B cell (primary cell): ENCODE measurements at regions of chr11 and their contacts with region 1.

Region 1: GRCh38 chr11:118198370-118198769 is 21.9 kb upstream of the SCN2B start:
- DNase-seq: peak; percentile 84
- ATAC-seq: peak; percentile 75
- H3K4me3 ChIP-seq: peak overlapping the region in 1 of 5 experiments; percentile 21
- H3K4me3 Mint-ChIP-seq: peak overlapping the region; percentile 44
- H3K27ac ChIP-seq: no peak overlapping the region
- H3K27ac Mint-ChIP-seq: no peak overlapping the region
- H3K4me1 ChIP-seq: peaks cover 0 to 3% of the 10 kb centered on the region in 2 donors
- H3K4me1 Mint-ChIP-seq: no peaks in the 10 kb centered on the region
- H3K27me3 ChIP-seq: peaks cover 0 to 15% (median 2%) of the 10 kb centered on the region in 4 experiments
- H3K27me3 Mint-ChIP-seq: peaks cover 3% of the 10 kb centered on the region
- CTCF ChIP-seq: peak; percentile 93

Region 2: GRCh38 chr11:118084247-118084646 is 114.1 kb before region 1 on chr11:
- CTCF ChIA-PET with region 1: no interaction called
- POLR2A ChIA-PET with region 1: no interaction called
- intact Hi-C with region 1: no loop called
- DNase-seq: no peak
- ATAC-seq: no peak
- H3K4me3 ChIP-seq: no peak overlapping the region
- H3K4me3 Mint-ChIP-seq: no peak overlapping the region
- H3K27ac ChIP-seq: no peak overlapping the region
- H3K27ac Mint-ChIP-seq: no peak overlapping the region
- H3K4me1 ChIP-seq: peaks cover 11 to 15% of the 10 kb centered on the region in 2 donors
- H3K4me1 Mint-ChIP-seq: peaks cover 14% of the 10 kb centered on the region
- H3K27me3 ChIP-seq: peaks cover 0 to 3% (median under 1%) of the 10 kb centered on the region in 4 experiments
- H3K27me3 Mint-ChIP-seq: peaks cover 22% of the 10 kb centered on the region
- CTCF ChIP-seq: no peak

Region 3: GRCh38 chr11:118128721-118129470 is 69.5 kb before region 1 on chr11:
- CTCF ChIA-PET with region 1: no interaction called
- POLR2A ChIA-PET with region 1: no interaction called
- intact Hi-C with region 1: no loop called
- DNase-seq: no peak
- ATAC-seq: no peak
- H3K4me3 ChIP-seq: no peak overlapping the region
- H3K4me3 Mint-ChIP-seq: no peak overlapping the region
- H3K27ac ChIP-seq: no peak overlapping the region
- H3K27ac Mint-ChIP-seq: no peak overlapping the region
- H3K4me1 ChIP-seq: no peaks in the 10 kb centered on the region
- H3K4me1 Mint-ChIP-seq: no peaks in the 10 kb centered on the region
- H3K27me3 ChIP-seq: peaks cover 0 to 12% (median 0%) of the 10 kb centered on the region in 4 experiments
- H3K27me3 Mint-ChIP-seq: peaks cover 18% of the 10 kb centered on the region
- CTCF ChIP-seq: no peak

Region 4: DNA sequence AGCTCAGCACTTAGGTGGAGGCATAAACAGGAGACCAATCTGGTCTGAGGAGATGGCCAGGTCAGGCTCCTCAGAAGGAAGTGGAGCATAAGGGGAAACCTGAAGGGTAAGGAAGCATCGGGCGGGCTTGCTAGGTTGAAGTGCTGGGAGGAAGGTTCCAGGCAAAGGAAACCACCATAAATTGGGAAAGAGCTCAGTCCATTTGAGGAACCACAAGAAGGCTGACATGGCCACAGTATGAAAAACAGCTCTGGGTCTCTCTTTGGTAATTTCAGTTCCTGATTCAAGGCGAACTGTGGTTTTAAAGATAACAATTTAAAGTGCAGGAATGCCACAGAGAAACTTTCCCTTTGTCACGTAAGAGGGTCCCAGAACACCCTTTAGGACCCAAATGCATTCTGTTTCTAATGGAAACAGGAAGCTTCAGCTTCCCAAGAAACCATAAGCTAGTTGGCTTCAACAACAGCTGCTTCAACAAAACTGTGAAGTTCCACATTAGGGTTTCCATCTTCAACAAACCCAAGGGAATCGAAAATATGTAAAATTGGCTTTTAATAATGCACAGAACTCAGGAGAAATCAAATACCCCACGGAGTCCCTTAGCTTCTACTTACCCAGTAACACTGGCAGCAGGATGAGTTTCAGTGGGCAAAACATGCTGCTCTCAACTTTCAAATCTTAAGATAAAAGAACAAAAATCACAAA is 16.0 kb after region 1 on chr11:
- CTCF ChIA-PET with region 1: interaction called, 59 read pairs
- POLR2A ChIA-PET with region 1: interaction called, 3 read pairs
- intact Hi-C with region 1: no loop called
- DNase-seq: peak; percentile 67
- ATAC-seq: peak; percentile 78
- H3K4me3 ChIP-seq: peak overlapping the region in 3 of 5 experiments; percentile 22 to 34 (median 28)
- H3K4me3 Mint-ChIP-seq: peak overlapping the region; percentile 84
- H3K27ac ChIP-seq: no peak overlapping the region
- H3K27ac Mint-ChIP-seq: peak overlapping the region; percentile 85
- H3K4me1 ChIP-seq: peaks cover 50 to 52% of the 10 kb centered on the region in 2 donors
- H3K4me1 Mint-ChIP-seq: peaks cover 53% of the 10 kb centered on the region
- H3K27me3 ChIP-seq: peaks cover 0 to 16% (median 8%) of the 10 kb centered on the region in 4 experiments
- H3K27me3 Mint-ChIP-seq: peaks cover 42% of the 10 kb centered on the region
- CTCF ChIP-seq: no peak

Region 5: DNA sequence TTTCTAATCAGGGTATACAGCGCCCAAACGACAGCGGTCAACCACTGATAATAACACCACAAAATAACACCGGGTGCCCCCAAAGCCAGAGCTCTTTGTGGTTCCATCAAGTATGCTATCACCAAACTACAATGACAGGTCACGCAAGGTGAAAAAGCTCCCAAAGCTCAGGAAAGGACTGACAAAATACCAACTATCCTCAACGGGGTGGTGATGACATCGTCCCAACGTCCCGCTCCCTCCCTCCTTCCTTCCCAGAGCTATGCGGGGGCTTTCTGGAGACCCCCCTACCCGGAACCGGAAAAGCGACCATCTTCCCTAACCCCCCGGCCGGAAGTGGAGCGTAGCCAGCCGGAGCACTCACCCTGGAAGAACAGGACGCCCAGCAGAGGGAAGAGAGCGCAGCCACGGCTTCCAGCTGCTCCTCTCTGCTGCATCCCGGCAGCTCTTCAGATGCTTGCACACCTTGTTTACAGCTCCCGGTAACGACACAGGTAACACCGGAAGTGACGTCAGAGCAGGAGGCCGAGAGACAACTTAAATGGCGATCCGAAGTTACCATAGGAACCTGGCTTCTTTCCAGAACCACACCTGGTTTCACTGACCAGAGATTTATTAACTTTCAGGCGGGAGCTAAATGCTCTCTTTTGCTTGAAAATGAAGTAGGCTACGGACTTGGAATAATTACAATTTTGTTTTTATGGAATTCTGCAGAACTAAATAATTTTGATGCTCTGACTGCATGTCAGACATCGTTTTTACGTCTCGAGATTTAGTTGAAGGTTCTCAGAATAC is 53.7 kb after region 1 on chr11 and contains the start of gene MPZL3:
- CTCF ChIA-PET with region 1: interaction called, 16 read pairs
- POLR2A ChIA-PET with region 1: no interaction called
- intact Hi-C with region 1: no loop called
- DNase-seq: peak; percentile 95
- ATAC-seq: peak; percentile 76
- H3K4me3 ChIP-seq: peak within 1 kb of the TSS; percentile 96 to 100 (median 97)
- H3K4me3 Mint-ChIP-seq: peak within 1 kb of the TSS; percentile 98
- H3K27ac ChIP-seq: peak within 1 kb of the TSS; percentile 91 to 97
- H3K27ac Mint-ChIP-seq: peak within 1 kb of the TSS; percentile 99
- H3K4me1 ChIP-seq: peaks cover 6 to 10% of the 10 kb centered on the region in 2 donors
- H3K4me1 Mint-ChIP-seq: peaks cover 13% of the 10 kb centered on the region
- H3K27me3 ChIP-seq: no peaks in the 10 kb centered on the region
- H3K27me3 Mint-ChIP-seq: peaks cover 20% of the 10 kb centered on the region
- CTCF ChIP-seq: no peak
- total RNA-seq, gene MPZL3: 4.2 and 4.9 TPM in 2 replicates

Region 6: DNA sequence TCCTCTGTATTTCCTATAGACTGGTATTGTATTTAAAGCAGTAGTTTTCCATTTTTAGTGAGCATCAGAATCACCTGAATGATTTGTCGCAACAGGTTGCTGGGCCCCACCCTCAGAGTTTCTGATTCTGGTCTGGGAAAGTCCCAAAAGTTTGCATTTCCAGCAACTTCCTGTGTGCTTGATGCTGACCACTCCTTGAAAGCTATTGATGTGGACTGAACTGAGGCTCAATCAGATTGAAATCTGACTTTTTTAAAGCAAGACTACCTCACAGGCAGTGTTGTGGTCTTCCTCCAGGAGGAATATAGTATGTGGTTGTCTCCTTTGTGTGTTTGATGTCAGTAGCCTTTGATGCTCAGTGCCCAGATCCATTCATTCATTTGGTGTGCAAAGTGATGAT is 82.9 kb after region 1 on chr11:
- CTCF ChIA-PET with region 1: interaction called, 10 read pairs
- POLR2A ChIA-PET with region 1: no interaction called
- intact Hi-C with region 1: no loop called
- DNase-seq: peak; percentile 54
- ATAC-seq: peak; percentile 31
- H3K4me3 ChIP-seq: no peak overlapping the region
- H3K4me3 Mint-ChIP-seq: peak overlapping the region; percentile 17
- H3K27ac ChIP-seq: peak overlapping the region in 1 of 2 donors; percentile 18
- H3K27ac Mint-ChIP-seq: no peak overlapping the region
- H3K4me1 ChIP-seq: peaks cover 7 to 15% of the 10 kb centered on the region in 2 donors
- H3K4me1 Mint-ChIP-seq: peaks cover 11% of the 10 kb centered on the region
- H3K27me3 ChIP-seq: peaks cover 0 to 7% (median 0%) of the 10 kb centered on the region in 4 experiments
- H3K27me3 Mint-ChIP-seq: peaks cover 8% of the 10 kb centered on the region
- CTCF ChIP-seq: no peak

Region 7: GRCh38 chr11:118301600-118302195 is 103.3 kb after region 1 on chr11:
- CTCF ChIA-PET with region 1: interaction called, 36 read pairs
- POLR2A ChIA-PET with region 1: no interaction called
- intact Hi-C with region 1: no loop called
- DNase-seq: no peak
- ATAC-seq: no peak
- H3K4me3 ChIP-seq: no peak overlapping the region
- H3K4me3 Mint-ChIP-seq: no peak overlapping the region
- H3K27ac ChIP-seq: no peak overlapping the region
- H3K27ac Mint-ChIP-seq: no peak overlapping the region
- H3K4me1 ChIP-seq: peaks cover 4 to 5% of the 10 kb centered on the region in 2 donors
- H3K4me1 Mint-ChIP-seq: peaks cover 11% of the 10 kb centered on the region
- H3K27me3 ChIP-seq: no peaks in the 10 kb centered on the region
- H3K27me3 Mint-ChIP-seq: peaks cover 5% of the 10 kb centered on the region
- CTCF ChIP-seq: no peak

Region 8: DNA sequence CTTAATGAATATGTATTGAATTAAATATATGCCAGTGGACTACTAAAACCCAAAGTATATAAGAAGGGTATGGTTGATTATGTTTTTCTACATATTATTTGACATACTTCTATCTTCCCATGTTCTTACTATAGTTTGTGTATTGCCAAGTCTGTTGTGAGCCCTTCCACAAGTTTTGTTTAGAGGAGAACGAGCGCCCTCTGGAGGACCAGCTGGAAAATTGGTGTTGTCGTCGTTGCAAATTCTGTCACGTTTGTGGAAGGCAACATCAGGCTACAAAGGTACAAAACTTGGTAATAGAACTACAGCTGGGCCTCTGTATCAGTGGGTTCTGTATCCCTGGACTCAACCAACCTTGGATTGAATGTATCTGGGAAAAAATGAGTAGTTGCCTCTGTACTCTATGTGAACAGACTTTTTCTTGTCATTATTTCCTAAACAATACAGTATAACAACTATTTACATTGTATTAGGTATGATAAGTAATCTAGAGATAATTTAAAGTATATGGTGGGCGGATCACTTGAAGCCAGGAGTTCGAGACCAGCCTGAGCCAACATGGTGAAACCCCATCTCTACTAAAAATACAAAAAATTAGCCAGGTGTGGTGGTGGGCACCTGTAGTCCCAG is 290.2 kb after region 1 on chr11:
- CTCF ChIA-PET with region 1: interaction called, 11 read pairs
- POLR2A ChIA-PET with region 1: no interaction called
- intact Hi-C with region 1: no loop called
- DNase-seq: peak; percentile 84
- ATAC-seq: peak; percentile 60
- H3K4me3 ChIP-seq: no peak overlapping the region
- H3K4me3 Mint-ChIP-seq: no peak overlapping the region
- H3K27ac ChIP-seq: no peak overlapping the region
- H3K27ac Mint-ChIP-seq: no peak overlapping the region
- H3K4me1 ChIP-seq: no peaks in the 10 kb centered on the region
- H3K4me1 Mint-ChIP-seq: no peaks in the 10 kb centered on the region
- H3K27me3 ChIP-seq: no peaks in the 10 kb centered on the region
- H3K27me3 Mint-ChIP-seq: no peaks in the 10 kb centered on the region
- CTCF ChIP-seq: peak; percentile 92

Region 9: DNA sequence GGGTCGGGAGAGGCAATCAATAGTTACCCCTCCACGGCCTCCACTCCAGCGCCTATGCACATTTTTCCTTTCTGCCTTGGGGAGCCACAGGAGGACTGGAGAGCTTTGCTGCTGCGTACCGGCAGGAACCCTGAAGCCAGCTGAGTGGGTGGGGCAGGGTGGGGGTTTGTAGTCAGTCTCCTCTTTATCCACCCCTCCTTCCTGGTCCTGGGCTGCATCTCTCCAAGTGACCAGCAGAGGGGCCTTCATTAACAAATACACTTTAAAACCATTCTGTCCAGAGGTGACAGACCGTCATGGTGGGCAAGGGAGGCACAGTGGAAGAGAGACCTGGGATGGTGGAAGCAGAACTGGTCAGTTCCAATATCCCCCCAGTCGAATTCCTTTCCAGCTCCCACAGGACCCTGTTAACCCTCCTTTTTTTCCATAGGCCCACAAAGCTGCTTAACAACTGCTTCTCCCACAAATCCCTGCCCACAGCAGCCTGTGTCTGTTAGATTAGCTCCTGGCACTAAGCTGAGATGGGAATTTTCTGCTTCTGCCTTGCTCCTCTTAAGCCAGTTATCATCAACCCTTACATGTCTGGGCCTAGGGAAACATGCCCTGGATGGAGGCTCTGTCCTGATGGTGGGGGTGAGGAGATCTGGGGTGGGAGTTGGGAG is 946.6 kb after region 1 on chr11:
- CTCF ChIA-PET with region 1: no interaction called
- POLR2A ChIA-PET with region 1: no interaction called
- intact Hi-C with region 1: no loop called
- DNase-seq: peak; percentile 55
- ATAC-seq: peak; percentile 74
- H3K4me3 ChIP-seq: no peak overlapping the region
- H3K4me3 Mint-ChIP-seq: no peak overlapping the region
- H3K27ac ChIP-seq: no peak overlapping the region
- H3K27ac Mint-ChIP-seq: no peak overlapping the region
- H3K4me1 ChIP-seq: peaks cover 12 to 19% of the 10 kb centered on the region in 2 donors
- H3K4me1 Mint-ChIP-seq: peaks cover 13% of the 10 kb centered on the region
- H3K27me3 ChIP-seq: peaks cover 0 to 54% (median 28%) of the 10 kb centered on the region in 4 experiments
- H3K27me3 Mint-ChIP-seq: peaks cover 45% of the 10 kb centered on the region
- CTCF ChIP-seq: peak; percentile 47